ENCODE measurements at regions of chr20 and their contacts with region 1.

Region 1: DNA sequence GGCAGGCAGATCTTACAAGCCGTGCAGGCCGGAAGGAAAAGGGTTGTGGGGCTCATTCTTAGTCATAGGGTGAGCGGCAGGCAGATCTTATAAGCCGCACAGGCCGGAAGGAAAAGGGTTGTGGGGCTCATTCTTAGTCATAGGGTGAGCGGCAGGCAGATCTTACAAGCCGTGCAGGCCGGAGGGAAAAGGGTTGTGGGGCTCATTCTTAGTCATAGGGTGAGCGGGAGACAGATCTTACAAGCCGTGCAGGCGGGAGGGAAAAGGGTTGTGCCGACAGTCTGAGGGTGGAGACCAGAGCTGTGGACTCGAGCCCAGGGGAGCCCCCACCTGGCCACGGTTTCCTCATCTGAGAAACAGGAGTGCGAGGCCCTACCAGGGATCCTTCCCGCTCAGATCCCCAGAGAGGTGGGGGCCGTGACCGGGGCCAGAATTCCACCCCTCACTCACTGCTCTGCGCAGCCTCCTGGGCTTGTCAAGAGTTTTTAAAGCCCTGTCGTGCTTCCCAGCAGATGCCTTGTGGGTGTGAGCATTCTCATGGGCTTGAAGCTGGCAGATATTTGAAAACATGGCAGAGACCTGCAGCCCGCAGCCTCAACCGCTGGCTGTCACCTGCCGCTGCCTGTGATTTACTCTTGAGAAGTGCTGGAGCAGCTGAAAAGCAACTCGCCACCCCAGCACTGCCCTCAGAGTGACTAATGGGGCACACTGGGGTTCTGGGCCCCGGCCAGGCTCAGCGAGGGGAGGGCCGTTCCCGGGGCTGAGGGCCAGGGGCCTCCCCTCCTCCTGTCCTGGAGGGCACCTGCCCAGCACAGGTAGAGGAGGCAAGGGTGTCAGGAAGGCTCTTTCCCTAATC is 31.9 kb downstream of the NTSR1 start:
- DNase-seq: peak; percentile 91
- H3K4me3 ChIP-seq: no peak overlapping the region
- H3K27ac ChIP-seq: no peak overlapping the region
- H3K4me1 ChIP-seq: peaks cover 45% of the 10 kb centered on the region
- H3K27me3 ChIP-seq: no peaks in the 10 kb centered on the region
- CTCF ChIP-seq: no peak

Region 2: DNA sequence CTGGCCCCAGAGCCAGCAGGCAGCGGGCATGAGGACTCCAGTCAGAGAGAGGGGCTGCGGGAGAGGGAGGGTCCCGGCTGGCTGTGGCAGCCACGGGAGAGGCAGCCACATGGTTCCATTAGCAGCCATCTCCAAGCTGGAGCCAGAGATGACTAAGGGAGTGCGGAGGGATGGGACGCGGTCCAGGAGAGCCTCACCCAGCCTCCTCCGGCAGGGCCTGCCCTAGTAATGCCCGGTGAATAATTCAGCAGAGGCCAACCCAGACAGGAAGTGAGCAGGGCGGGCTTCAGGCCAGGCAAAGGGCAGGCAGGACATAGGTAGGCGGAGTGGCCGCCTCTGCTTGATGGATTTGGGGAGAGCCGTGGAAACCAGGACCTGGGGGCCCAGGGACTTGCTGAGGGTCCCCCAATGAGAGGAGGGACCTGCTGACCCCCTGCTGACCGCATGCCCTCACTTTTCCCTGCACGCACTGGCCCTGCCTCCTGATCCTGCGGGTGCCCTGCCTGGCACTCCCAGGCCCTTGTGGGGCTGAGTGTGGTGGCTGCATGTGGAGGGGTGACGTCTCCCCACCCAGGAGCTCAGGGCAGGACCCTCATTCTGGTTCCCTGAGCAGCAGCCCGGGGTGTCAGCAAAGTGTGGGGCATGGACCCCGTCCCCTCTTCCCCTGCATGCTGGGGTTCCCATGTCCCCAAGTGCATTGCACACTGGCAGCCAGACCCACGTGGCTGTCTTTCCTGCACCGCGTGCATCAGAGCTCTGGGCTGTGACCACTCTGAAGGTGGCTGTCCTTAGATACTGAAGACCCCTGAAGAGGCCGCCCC is 150.0 kb before region 1 on chr20:
- CTCF ChIA-PET with region 1: no interaction called
- dilution Hi-C with region 1: no loop called
- in situ Hi-C with region 1: no loop called
- intact Hi-C with region 1: no loop called
- DNase-seq: peak; percentile 75
- H3K4me3 ChIP-seq: no peak overlapping the region
- H3K27ac ChIP-seq: no peak overlapping the region
- H3K4me1 ChIP-seq: peaks cover 12% of the 10 kb centered on the region
- H3K27me3 ChIP-seq: no peaks in the 10 kb centered on the region
- CTCF ChIP-seq: no peak

Region 3: GRCh38 chr20:62704301-62704948 is 36.1 kb before region 1 on chr20:
- CTCF ChIA-PET with region 1: no interaction called
- dilution Hi-C with region 1: no loop called
- in situ Hi-C with region 1: no loop called
- intact Hi-C with region 1: loop called (anchors 2 kb)
- DNase-seq: peak; percentile 97
- H3K4me3 ChIP-seq: no peak overlapping the region
- H3K27ac ChIP-seq: no peak overlapping the region
- H3K4me1 ChIP-seq: peaks cover 47% of the 10 kb centered on the region
- H3K27me3 ChIP-seq: peaks cover 2% of the 10 kb centered on the region
- CTCF ChIP-seq: peak in 1 of 2 donors; percentile 5